ENCODE measurements at regions of chr6 and their contacts with region 1.

Region 1: DNA sequence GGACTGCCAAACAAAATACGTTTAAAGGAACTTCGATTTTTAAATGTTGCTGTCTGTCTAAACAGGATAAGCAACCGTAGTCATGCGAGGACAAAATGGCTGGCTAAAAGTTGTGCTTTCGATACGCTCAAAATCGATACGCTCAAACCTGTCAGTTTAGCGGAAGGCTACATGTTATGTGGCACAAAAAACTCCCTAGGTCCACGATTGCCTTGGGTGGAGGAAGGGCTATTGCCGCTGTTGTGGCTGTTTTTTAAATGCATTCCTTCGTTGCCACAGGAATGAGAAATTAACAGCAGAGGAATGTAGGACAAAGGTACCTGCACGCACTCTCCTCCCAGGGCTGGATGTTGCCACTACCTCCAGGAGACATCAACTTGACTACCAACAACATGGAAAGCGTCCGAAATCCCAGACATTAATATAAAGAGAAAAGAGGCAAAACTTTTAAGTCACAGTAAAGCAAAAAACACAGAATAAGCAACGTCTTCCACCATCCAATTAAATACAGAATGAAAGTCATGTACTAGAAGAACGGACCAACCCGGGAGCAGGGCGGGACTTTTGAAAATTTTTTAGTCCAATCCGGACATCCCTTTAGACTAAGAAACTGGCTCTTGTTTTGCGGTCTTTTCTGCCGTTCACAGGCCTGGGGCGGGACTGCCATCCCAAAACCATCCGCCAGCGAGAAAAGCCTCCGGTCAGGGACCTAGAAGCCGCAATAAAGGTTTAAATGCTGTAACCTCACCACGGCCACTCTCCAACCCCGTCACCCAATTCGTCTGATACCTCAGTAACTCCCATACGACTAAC is 32.2 kb upstream of the HFE start:
- DNase-seq: peak; percentile 93
- ATAC-seq: peak; percentile 93
- H3K4me3 ChIP-seq: peak overlapping the region; percentile 90 to 97
- H3K27ac ChIP-seq: peak overlapping the region; percentile 90 to 95
- H3K4me1 ChIP-seq: no peaks in the 10 kb centered on the region
- H3K27me3 ChIP-seq: peaks cover 0 to 2% of the 10 kb centered on the region in 2 donors

Region 2: DNA sequence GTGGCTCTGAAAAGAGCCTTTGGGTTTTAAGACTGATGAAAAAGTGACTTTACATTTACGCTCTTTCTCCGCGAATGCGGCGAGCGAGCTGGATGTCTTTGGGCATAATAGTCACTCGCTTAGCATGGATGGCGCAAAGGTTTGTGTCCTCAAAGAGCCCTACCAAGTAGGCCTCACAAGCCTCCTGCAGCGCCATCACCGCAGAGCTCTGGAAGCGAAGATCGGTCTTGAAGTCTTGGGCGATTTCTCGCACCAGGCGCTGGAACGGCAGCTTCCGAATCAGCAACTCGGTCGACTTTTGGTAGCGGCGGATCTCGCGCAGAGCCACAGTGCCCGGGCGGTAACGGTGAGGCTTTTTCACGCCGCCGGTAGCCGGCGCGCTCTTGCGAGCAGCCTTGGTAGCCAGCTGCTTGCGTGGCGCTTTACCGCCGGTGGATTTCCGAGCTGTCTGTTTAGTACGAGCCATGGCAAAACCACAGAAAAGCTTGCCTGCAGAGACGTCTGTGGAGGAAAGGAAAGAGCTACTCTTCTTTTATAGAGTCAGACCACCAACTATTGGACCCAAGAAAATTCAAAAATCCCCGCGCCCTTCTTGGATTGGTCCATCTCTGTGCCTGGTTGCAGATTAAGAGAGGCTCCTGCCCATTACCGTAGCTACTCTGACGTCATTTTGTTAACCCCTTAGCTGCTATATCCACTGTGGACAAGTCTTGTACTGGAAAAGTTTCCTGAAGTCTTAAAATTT is 23.3 kb before region 1 on chr6:
- intact Hi-C with region 1: loop called in 1 of 2 experiments (anchors 2 kb)
- DNase-seq: peak; percentile 84 to 86
- ATAC-seq: peak; percentile 92
- H3K4me3 ChIP-seq: peak overlapping the region; percentile 9 to 37
- H3K27ac ChIP-seq: no peak overlapping the region
- H3K4me1 ChIP-seq: no peaks in the 10 kb centered on the region
- H3K27me3 ChIP-seq: peaks cover 0 to 3% of the 10 kb centered on the region in 2 donors

Region 3: GRCh38 chr6:26043384-26044139 is 11.5 kb before region 1 on chr6:
- intact Hi-C with region 1: loop called in 1 of 2 experiments (anchors 1 kb)
- DNase-seq: peak; percentile 78 to 85
- ATAC-seq: peak; percentile 95
- H3K4me3 ChIP-seq: peak overlapping the region; percentile 46 to 74
- H3K27ac ChIP-seq: peak overlapping the region; percentile 97
- H3K4me1 ChIP-seq: no peaks in the 10 kb centered on the region
- H3K27me3 ChIP-seq: no peaks in the 10 kb centered on the region

Region 4: DNA sequence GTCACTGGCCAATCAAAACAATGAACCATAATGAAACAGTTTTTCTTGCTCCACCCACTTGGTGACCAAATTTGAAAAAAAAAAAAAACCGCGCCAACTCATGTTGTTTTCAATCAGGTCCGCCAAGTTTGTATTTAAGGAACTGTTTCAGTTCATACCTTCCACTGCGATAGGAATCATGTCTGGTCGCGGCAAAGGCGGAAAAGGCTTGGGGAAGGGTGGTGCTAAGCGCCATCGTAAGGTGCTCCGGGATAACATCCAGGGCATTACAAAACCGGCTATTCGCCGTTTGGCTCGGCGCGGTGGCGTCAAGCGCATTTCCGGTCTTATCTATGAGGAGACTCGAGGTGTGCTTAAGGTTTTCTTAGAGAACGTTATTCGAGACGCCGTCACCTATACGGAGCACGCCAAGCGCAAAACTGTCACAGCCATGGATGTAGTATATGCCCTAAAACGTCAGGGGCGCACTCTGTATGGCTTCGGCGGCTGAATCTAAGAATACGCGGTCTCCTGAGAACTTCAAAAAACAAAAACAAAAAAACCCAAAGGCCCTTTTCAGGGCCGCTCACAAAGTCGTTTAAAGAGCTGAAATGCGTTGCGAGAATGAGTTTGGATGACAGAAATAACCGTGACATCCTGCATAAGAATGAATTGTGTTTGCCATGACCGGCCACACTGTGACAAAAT is 48.9 kb after region 1 on chr6:
- intact Hi-C with region 1: loop called in 1 of 2 experiments (anchors 2 kb)
- DNase-seq: peak; percentile 91 to 92
- ATAC-seq: peak; percentile 97
- H3K4me3 ChIP-seq: peak overlapping the region; percentile 43 to 92
- H3K27ac ChIP-seq: peak overlapping the region; percentile 86 to 88
- H3K4me1 ChIP-seq: no peaks in the 10 kb centered on the region
- H3K27me3 ChIP-seq: peaks cover 0 to 4% of the 10 kb centered on the region in 2 donors

Region 5: DNA sequence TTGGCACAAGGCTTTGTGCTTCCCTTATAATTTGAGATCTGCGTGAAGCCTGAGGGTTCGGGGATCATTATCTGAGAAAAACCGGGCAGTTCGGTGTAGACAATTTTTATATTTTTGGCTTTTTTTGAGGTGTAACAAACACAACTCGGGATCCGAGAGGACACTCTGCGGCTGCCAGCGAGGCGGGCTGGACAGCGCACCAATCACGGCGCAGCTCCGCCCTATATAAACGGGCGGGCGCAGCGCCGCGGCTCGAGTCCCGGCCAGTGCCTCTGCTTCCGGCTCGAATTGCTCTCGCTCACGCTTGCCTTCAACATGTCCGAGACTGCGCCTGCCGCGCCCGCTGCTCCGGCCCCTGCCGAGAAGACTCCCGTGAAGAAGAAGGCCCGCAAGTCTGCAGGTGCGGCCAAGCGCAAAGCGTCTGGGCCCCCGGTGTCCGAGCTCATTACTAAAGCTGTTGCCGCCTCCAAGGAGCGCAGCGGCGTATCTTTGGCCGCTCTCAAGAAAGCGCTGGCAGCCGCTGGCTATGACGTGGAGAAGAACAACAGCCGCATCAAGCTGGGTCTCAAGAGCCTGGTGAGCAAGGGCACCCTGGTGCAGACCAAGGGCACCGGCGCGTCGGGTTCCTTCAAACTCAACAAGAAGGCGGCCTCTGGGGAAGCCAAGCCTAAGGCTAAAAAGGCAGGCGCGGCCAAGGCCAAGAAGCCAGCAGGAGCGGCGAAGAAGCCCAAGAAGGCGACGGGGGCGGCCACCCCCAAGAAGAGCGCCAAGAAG is 101.2 kb after region 1 on chr6:
- intact Hi-C with region 1: no loop called
- DNase-seq: peak; percentile 93 to 96
- ATAC-seq: peak; percentile 94
- H3K4me3 ChIP-seq: peak overlapping the region; percentile 78 to 96
- H3K27ac ChIP-seq: peak overlapping the region; percentile 93 to 99
- H3K4me1 ChIP-seq: peaks cover 0 to 4% of the 10 kb centered on the region in 2 donors
- H3K27me3 ChIP-seq: peaks cover 0 to 4% of the 10 kb centered on the region in 2 donors

Region 6: DNA sequence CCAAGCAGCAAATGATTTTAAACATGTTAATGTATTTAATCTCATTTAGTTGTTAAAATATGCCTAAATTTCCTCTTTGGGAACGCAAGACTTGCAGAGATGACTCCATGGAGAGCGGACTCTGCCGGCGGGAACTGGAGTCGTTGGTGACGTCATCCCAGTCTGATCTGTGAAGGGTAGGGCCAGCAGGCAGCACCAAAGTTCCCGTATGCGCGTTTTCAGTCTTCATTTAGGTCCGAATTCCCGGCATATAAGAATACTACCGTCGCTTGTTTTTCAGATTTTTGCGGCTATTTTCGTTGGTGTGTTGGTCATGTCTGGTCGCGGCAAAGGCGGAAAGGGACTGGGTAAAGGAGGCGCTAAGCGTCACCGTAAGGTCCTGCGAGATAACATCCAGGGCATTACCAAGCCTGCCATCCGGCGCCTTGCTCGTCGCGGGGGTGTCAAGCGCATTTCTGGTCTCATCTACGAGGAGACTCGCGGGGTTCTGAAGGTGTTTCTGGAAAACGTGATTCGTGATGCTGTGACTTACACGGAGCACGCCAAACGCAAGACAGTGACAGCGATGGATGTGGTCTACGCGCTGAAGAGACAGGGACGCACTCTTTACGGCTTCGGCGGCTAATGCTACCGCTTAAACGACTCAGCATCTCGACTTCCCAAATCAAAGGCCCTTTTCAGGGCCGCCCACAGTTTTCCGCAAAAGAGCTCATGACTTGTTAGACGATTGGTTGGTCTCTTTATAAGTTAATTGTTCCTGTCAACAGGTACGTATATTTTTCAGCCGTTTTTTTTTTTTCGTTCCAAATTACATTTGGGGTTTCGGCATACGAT is 149.5 kb after region 1 on chr6:
- intact Hi-C with region 1: loop called in 1 of 2 experiments (anchors 10 kb)
- DNase-seq: peak; percentile 92 to 96
- ATAC-seq: peak; percentile 95
- H3K4me3 ChIP-seq: peak overlapping the region; percentile 62 to 68
- H3K27ac ChIP-seq: peak overlapping the region; percentile 10 to 100
- H3K4me1 ChIP-seq: no peaks in the 10 kb centered on the region
- H3K27me3 ChIP-seq: peaks cover 0 to 2% of the 10 kb centered on the region in 2 donors